BJ (cell line): ENCODE measurements at regions of chr1 and their contacts with region 1.

Region 1: DNA sequence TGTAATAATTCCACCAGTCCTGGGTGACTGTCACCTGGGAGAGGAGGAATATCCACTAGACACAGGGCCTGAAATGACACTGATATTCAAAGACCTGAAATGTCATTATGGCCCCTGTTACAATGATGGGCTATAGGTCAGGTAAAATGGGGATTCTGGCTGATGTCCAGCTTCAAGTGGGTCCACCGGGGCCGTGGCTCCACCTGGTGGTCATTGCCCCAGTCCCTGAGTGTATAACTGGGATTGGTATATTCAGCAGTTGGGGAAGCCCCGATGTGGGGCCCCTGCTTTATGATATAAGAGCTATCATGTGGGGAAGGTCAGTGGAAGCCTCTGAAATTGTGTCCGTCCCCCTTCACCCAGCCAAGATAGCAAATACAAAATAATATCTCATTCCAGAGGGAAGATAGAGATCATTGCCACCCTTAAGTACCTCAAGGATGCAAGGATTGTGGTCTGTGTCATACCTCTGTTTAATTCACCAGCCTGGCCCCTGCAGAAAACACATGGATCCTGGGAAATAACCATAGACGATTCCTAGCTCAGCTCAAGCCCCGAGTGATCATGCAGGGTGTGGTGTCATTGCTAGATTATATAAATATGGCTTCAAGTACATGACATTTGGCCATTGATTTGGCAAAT is 19.4 kb downstream of the PLEKHO1 start:
- DNase-seq: no peak
- H3K4me3 ChIP-seq: no peak overlapping the region
- H3K27me3 ChIP-seq: no peaks in the 10 kb centered on the region
- CTCF ChIP-seq: peak; percentile 85

Region 2: DNA sequence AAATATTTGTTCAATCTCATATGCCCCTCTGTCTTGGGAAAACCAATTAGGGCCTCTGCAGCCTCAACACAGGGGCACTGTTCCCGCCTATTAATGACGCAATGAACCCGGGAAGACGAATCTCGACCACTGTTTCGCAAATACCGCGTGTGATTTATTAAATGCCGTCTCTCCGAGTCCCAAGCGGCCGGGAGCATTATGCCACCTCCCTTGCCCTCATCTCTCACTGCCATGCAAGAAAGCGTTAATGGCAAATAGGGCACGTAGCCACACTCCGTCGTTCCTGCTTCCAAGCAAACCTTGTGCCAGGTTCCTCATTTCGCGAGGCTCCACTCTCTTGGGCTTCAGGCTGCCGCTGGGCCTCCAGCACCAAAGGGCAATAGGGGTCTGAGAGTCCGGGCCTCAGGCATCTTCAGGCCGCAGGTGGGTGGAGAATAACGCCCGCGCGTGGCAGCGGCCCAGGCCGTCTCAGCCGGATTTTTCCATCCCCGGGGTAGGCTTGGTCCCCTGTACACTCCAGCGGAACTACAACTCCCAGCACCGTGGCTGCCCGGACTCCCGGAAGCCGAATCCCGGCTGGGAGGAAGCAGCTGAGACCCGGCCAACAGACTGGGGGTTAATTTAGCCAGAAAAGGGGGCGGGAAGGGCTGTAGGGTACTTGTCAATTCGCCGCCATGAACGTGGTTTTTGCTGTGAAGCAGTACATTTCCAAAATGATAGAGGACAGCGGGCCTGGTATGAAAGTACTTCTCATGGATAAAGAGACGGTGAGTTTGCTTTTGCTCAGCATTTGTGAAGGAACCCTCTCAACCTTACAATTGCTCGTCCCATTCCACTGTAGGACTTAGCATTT is 101.7 kb before region 1 on chr1 and contains the start of gene VPS45:
- CTCF ChIA-PET with region 1: interaction called, 101 read pairs
- POLR2A ChIA-PET with region 1: no interaction called
- DNase-seq: peak; percentile 47
- H3K4me3 ChIP-seq: peak within 1 kb of the TSS; percentile 59
- H3K27me3 ChIP-seq: no peaks in the 10 kb centered on the region
- CTCF ChIP-seq: no peak
- polyA plus RNA-seq, gene VPS45: 29.0 and 47.0 TPM in 2 replicates